Activated CD4-positive, alpha-beta T cell treated with anti-CD3 and anti-CD28 coated beads for 36 hours (primary cell): ENCODE measurements at regions of chr3 and their contacts with region 1.

Region 1: DNA sequence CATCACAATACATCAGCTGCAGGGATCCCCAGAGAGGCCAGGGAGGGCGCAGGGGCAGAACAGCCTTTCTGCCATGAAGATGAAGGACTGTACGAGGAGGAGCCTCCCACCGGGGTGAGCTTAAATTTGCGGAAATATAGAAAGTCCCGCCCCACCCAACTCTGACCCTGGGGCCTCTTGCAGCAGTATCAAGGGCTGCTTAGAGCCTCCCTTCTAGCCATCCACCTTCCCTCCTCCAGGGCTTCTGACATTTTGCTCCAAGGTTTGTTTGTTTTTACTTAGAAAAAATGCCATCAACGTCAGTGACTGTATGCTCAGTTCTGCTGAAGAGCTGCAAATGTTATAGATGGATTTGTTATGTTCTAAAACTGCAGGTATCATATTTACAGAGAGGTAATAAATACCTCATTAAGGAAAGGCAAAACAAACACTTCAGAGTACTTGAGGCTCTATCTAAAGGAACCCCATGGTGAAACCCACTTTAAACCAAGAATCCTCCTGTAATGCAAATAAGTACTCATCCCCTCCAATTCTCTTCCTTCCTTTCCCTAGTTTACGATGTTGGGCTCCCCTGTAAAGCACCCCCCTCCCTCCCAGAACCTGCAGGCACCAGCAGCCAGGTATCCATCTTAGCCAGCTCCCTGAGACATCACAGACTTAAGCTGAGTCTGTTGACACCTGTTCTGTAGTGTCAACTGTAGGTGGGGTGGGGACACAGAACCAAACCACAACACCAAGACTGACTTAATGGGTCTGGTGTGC is 30.5 kb downstream of the RFTN1 start:
- DNase-seq: peak; percentile 55
- ATAC-seq: peak; percentile 72
- H3K4me3 Mint-ChIP-seq: peak overlapping the region; percentile 34
- H3K27ac Mint-ChIP-seq: peak overlapping the region; percentile 91
- H3K4me1 Mint-ChIP-seq: peaks cover 75% of the 10 kb centered on the region
- H3K27me3 Mint-ChIP-seq: no peaks in the 10 kb centered on the region

Region 2: GRCh38 chr3:16496408-16497222 is 13.7 kb after region 1 on chr3:
- CTCF ChIA-PET with region 1: interaction called, 10 read pairs
- POLR2A ChIA-PET with region 1: interaction called, 3 read pairs
- intact Hi-C with region 1: loop called in 1 of 2 experiments (anchors 2 kb)
- DNase-seq: peak; percentile 46
- ATAC-seq: peak; percentile 67
- H3K4me3 Mint-ChIP-seq: no peak overlapping the region
- H3K27ac Mint-ChIP-seq: peak overlapping the region; percentile 53
- H3K4me1 Mint-ChIP-seq: peaks cover 60% of the 10 kb centered on the region
- H3K27me3 Mint-ChIP-seq: no peaks in the 10 kb centered on the region

Region 3: GRCh38 chr3:16842272-16843270 is 359.6 kb after region 1 on chr3:
- CTCF ChIA-PET with region 1: no interaction called
- POLR2A ChIA-PET with region 1: no interaction called
- intact Hi-C with region 1: no loop called
- DNase-seq: peak; percentile 87
- ATAC-seq: peak; percentile 96
- H3K4me3 Mint-ChIP-seq: peak overlapping the region; percentile 69
- H3K27ac Mint-ChIP-seq: peak overlapping the region; percentile 95
- H3K4me1 Mint-ChIP-seq: peaks cover 75% of the 10 kb centered on the region
- H3K27me3 Mint-ChIP-seq: no peaks in the 10 kb centered on the region